Heart left ventricle (tissue), 16 donors: ENCODE measurements at regions of chr4 and their contacts with region 1.

Region 1: DNA sequence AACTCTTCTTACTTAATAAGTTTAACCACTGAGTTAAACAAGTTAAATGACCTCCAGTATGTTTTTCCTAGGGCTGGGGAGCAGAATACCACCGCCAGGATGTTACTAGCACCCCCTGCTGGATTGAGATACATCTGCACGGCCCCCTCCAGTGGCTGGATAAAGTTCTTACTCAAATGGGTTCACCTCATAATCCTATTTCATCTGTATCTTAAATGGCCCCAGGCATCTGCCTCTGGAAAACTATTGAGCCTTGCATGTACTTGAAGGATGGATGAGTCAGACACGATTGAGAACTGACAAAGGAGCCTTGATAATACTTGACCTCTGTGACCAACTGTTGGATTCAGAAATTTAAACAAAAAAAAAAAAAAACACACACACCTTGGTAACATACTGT is 61.5 kb upstream of the MMAA start:
- DNase-seq: peak in 4 of 5 donors; percentile 41 to 57 (median 46)
- ATAC-seq: peak; percentile 77 to 89 (median 87)
- H3K4me3 ChIP-seq: no peak overlapping the region
- H3K27ac ChIP-seq: no peak overlapping the region
- H3K4me1 ChIP-seq: no peaks in the 10 kb centered on the region
- H3K27me3 ChIP-seq: no peaks in the 10 kb centered on the region
- CTCF ChIP-seq: peak; percentile 75 to 96 (median 86)
- POLR2A ChIP-seq: no peak

Region 2: DNA sequence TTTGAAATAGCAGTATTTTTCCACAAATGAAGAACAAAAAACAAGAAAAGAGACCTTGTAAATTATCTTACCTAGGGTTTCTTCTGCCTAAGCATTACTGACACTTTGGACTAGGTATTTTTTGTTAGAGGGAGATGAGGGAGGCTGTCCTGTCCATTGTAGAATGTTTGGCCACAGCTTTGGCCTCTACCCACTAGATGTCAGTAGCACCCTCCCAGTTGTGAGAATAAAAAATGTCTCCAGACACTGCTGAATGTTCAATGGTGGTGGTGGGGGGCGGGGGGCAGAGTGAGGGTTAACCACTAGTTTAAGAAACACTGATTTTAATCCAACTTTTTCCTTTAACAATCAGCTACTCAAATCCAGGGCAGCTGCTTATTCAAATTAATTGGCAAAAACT is 403.1 kb before region 1 on chr4:
- intact Hi-C with region 1: loop called in 4 of 10 experiments (anchors 10 kb)
- DNase-seq: no peak
- ATAC-seq: peak; percentile 51 to 86 (median 82)
- H3K4me3 ChIP-seq: no peak overlapping the region
- H3K27ac ChIP-seq: peak overlapping the region in 7 of 12 donors; percentile 21 to 77 (median 57)
- H3K4me1 ChIP-seq: peaks cover 0 to 22% (median 5%) of the 10 kb centered on the region in 12 donors
- H3K27me3 ChIP-seq: no peaks in the 10 kb centered on the region
- CTCF ChIP-seq: peak; percentile 23 to 65 (median 54)
- POLR2A ChIP-seq: no peak

Region 3: GRCh38 chr4:145234091-145234706 is 323.5 kb before region 1 on chr4:
- intact Hi-C with region 1: loop called (anchors 2 to 5 kb)
- DNase-seq: peak in 3 of 5 donors; percentile 24 to 44 (median 36)
- ATAC-seq: peak; percentile 73 to 83 (median 81)
- H3K4me3 ChIP-seq: no peak overlapping the region
- H3K27ac ChIP-seq: no peak overlapping the region
- H3K4me1 ChIP-seq: no peaks in the 10 kb centered on the region
- H3K27me3 ChIP-seq: no peaks in the 10 kb centered on the region
- CTCF ChIP-seq: peak; percentile 69 to 84 (median 74)
- POLR2A ChIP-seq: no peak

Region 4: GRCh38 chr4:145260091-145260490 is 297.6 kb before region 1 on chr4:
- intact Hi-C with region 1: no loop called
- DNase-seq: no peak
- ATAC-seq: no peak
- H3K4me3 ChIP-seq: no peak overlapping the region
- H3K27ac ChIP-seq: no peak overlapping the region
- H3K4me1 ChIP-seq: no peaks in the 10 kb centered on the region
- H3K27me3 ChIP-seq: no peaks in the 10 kb centered on the region
- CTCF ChIP-seq: no peak
- POLR2A ChIP-seq: no peak

Region 5: GRCh38 chr4:145347684-145348083 is 210.0 kb before region 1 on chr4:
- intact Hi-C with region 1: loop called in 1 of 10 experiments (anchors 10 kb)
- DNase-seq: no peak
- ATAC-seq: no peak
- H3K4me3 ChIP-seq: no peak overlapping the region
- H3K27ac ChIP-seq: no peak overlapping the region
- H3K4me1 ChIP-seq: peaks cover 0 to 14% (median 0%) of the 10 kb centered on the region in 12 donors
- H3K27me3 ChIP-seq: no peaks in the 10 kb centered on the region
- CTCF ChIP-seq: no peak
- POLR2A ChIP-seq: no peak

Region 6: DNA sequence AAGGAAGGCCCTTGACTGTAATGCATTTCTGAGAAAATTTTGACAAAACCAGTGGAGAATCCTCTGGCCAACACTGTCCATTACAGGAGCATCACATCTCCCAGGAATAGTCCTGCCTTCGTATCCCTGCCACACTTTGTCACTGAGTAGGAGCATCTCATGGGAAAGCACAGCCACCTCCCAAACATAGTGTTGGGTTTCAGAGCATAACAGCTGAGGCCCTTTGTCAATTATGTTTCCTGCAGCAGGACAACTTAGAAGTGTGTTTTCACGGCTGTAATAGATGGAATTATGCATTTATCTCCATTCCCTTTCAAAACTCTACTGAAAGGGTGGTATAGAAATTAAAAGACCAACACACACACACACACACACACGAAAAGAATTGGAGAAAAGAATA is 167.1 kb before region 1 on chr4:
- intact Hi-C with region 1: loop called in 1 of 10 experiments (anchors 10 kb)
- DNase-seq: no peak
- ATAC-seq: no peak
- H3K4me3 ChIP-seq: no peak overlapping the region
- H3K27ac ChIP-seq: no peak overlapping the region
- H3K4me1 ChIP-seq: no peaks in the 10 kb centered on the region
- H3K27me3 ChIP-seq: no peaks in the 10 kb centered on the region
- CTCF ChIP-seq: no peak
- POLR2A ChIP-seq: no peak

Region 7: DNA sequence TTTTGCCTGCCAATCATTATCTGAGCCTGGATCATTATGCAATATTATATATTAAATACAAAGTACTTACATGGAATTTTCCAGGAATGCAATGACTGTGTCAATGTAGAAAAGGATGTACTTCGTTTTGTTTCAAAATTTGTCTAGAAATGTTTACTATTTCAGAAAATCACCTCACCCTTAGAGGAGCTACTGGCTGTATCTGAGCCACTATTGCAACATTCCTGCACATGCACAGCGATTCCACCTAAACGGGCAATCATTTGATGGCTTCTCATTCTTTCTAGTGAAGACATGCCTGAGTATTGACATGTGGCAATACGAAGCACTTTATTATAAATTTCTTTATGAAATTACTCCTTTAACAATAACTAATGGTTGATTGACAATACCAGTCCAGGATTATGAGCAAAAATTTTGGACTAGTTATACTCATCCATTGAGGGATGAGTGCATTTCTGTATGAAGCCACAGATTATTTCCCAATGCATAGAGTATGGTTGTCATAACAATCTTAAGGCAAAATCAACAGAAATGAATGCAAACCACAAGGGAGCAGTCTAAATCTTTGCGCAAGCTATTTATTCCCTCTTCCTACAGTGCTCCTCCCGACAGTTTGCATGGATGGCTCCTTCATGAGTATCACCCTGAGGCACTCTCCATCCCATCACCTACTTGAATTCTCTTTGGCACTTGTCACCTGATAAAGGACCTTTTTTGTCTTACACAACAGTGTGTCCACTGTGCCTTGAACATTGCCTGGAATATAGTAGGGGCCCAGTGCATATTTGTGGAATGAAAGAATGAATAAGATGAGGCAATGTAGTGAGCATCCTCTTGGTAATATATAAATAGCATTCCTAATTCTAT is 25.7 kb after region 1 on chr4:
- intact Hi-C with region 1: no loop called
- DNase-seq: no peak
- ATAC-seq: no peak
- H3K4me3 ChIP-seq: no peak overlapping the region
- H3K27ac ChIP-seq: no peak overlapping the region
- H3K4me1 ChIP-seq: no peaks in the 10 kb centered on the region
- H3K27me3 ChIP-seq: no peaks in the 10 kb centered on the region
- CTCF ChIP-seq: no peak
- POLR2A ChIP-seq: no peak

Region 8: DNA sequence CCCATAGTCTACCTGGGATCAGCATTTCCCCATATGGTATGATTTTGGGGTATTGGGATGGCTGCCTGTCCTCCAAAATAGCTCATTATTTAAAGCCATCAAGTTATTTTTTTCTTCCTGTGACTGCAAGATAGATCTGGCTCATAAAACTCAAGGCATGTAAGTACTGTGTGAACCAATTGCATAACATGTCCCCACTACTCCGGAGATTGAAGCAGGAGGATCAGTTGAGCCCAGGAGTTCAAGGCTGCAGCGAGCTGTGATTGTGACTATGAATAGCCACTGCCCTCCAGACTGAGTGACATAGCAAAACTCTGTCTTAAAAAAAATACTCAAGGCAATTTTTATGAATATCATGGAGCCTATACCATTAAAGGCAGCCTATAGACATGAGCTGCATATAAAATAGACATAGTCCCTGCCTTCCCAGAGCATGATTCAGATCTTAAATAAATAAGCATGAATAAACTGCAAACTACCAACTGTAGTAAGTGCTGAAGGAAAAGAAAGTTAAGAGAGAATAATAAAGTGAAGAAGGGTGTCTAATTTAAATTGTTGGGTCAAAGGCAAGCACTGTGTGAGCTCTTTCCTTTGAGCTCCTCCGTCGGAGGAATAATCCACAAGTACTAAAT is 44.5 kb after region 1 on chr4:
- intact Hi-C with region 1: loop called in 2 of 10 experiments (anchors 2 to 5 kb)
- DNase-seq: no peak
- ATAC-seq: no peak
- H3K4me3 ChIP-seq: no peak overlapping the region
- H3K27ac ChIP-seq: no peak overlapping the region
- H3K4me1 ChIP-seq: no peaks in the 10 kb centered on the region
- H3K27me3 ChIP-seq: no peaks in the 10 kb centered on the region
- CTCF ChIP-seq: no peak
- POLR2A ChIP-seq: no peak